ENCODE measurements at regions of chr16 and their contacts with region 1.

Region 1: GRCh38 chr16:75385507-75386152 is 47.7 kb downstream of the CFDP1 start:
- DNase-seq: peak; percentile 88
- ATAC-seq: peak; percentile 33
- H3K4me3 ChIP-seq: no peak overlapping the region
- H3K27ac ChIP-seq: no peak overlapping the region
- H3K4me1 ChIP-seq: peaks cover 21% of the 10 kb centered on the region
- H3K27me3 ChIP-seq: no peaks in the 10 kb centered on the region
- CTCF ChIP-seq: peak; percentile 74
- POLR2A ChIP-seq: no peak
- RAD21 ChIP-seq: peak; percentile 85

Region 2: GRCh38 chr16:75265845-75266701 is 119.6 kb before region 1 on chr16:
- CTCF ChIA-PET with region 1: no interaction called
- POLR2A ChIA-PET with region 1: no interaction called
- dilution Hi-C with region 1: no loop called
- in situ Hi-C with region 1: no loop called
- intact Hi-C with region 1: loop called (anchors 1 kb)
- DNase-seq: peak; percentile 47
- ATAC-seq: peak; percentile 75
- H3K4me3 ChIP-seq: peak overlapping the region; percentile 94
- H3K27ac ChIP-seq: peak overlapping the region; percentile 97
- H3K4me1 ChIP-seq: peaks cover 42% of the 10 kb centered on the region
- H3K27me3 ChIP-seq: no peaks in the 10 kb centered on the region
- CTCF ChIP-seq: 0 out of 2 replicates have a peak, but pooled peaks have one; percentile 1
- POLR2A ChIP-seq: peak; percentile 74
- RAD21 ChIP-seq: no peak

Region 3: GRCh38 chr16:75305364-75306098 is 80.1 kb before region 1 on chr16:
- CTCF ChIA-PET with region 1: no interaction called
- POLR2A ChIA-PET with region 1: no interaction called
- dilution Hi-C with region 1: no loop called
- in situ Hi-C with region 1: no loop called
- intact Hi-C with region 1: loop called (anchors 1 kb)
- DNase-seq: peak; percentile 100
- ATAC-seq: peak; percentile 93
- H3K4me3 ChIP-seq: no peak overlapping the region; the same call in 1 of the 2 replicates
- H3K27ac ChIP-seq: peak overlapping the region; percentile 92
- H3K4me1 ChIP-seq: peaks cover 18% of the 10 kb centered on the region
- H3K27me3 ChIP-seq: no peaks in the 10 kb centered on the region
- CTCF ChIP-seq: no peak
- POLR2A ChIP-seq: peak; percentile 89
- RAD21 ChIP-seq: no peak; the same call in 1 of the 2 replicates

Region 4: DNA sequence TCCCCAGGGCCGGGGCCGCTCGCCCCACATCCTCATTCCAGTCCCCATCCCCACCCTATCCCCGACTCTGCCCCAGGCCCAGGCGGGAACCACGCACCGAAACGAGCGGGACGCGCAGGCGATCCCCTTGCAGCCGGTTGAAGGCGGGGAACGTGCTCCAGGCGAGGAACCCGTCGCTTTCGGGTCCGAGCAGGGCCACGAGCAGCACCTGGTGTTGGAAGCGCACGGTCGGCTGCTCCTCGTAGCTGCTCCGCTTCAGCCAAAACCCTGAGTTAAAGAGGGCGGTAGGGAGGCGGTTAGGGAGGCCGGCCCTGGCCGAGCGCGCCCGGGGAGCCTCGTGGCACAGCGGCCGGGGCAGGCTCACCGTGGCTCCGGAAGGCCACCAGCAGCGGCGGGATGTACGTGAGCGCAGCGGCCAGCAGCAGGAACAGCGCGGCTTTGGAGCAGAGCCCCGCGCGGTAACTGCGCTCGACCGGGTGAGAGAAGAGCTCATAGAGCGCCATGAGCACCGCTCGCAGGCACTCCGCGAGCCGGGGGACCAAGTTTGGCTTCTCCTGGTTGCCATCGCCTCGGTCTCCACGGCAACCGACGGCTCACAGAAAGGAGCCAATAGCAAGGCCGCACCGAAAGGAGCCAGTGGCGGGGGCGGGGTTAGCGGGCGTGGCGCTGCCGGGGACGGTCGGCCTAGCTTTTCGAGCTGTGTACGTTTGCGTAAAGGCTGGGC is 170.2 kb after region 1 on chr16 and contains the start of gene TMEM231:
- CTCF ChIA-PET with region 1: no interaction called
- POLR2A ChIA-PET with region 1: no interaction called
- dilution Hi-C with region 1: no loop called
- in situ Hi-C with region 1: no loop called
- intact Hi-C with region 1: no loop called
- DNase-seq: peak; percentile 89
- ATAC-seq: peak; percentile 93
- H3K4me3 ChIP-seq: peak within 1 kb of the TSS; percentile 46
- H3K27ac ChIP-seq: peak within 1 kb of the TSS; percentile 24; the same call in 1 of the 2 replicates
- H3K4me1 ChIP-seq: peaks cover 5% of the 10 kb centered on the region; the same call in 1 of the 2 replicates
- H3K27me3 ChIP-seq: peaks cover 7% of the 10 kb centered on the region
- CTCF ChIP-seq: no peak
- POLR2A ChIP-seq: no peak; the same call in 1 of the 2 replicates
- RAD21 ChIP-seq: no peak
- total RNA-seq, gene TMEM231: 7.5 and 10.6 TPM in 2 replicates

Region 5: GRCh38 chr16:75687361-75687760 is 301.7 kb after region 1 on chr16:
- CTCF ChIA-PET with region 1: no interaction called
- POLR2A ChIA-PET with region 1: no interaction called
- dilution Hi-C with region 1: no loop called
- in situ Hi-C with region 1: no loop called
- intact Hi-C with region 1: no loop called
- DNase-seq: no peak
- ATAC-seq: no peak
- H3K4me3 ChIP-seq: no peak overlapping the region
- H3K27ac ChIP-seq: no peak overlapping the region
- H3K4me1 ChIP-seq: no peaks in the 10 kb centered on the region
- H3K27me3 ChIP-seq: no peaks in the 10 kb centered on the region
- CTCF ChIP-seq: no peak
- POLR2A ChIP-seq: no peak
- RAD21 ChIP-seq: no peak

Measured in IMR-90 (cell line).